ENCODE measurements at regions of chr19 and their contacts with region 1.

Region 1: GRCh38 chr19:48363810-48364563 is at the starts of genes SYNGR4 and TMEM143:
- DNase-seq: peak; percentile 99
- ATAC-seq: peak; percentile 87
- H3K4me3 Mint-ChIP-seq: peak within 1 kb of the TSS; percentile 81
- H3K27ac Mint-ChIP-seq: peak within 1 kb of the TSS; percentile 97
- H3K4me1 Mint-ChIP-seq: peaks cover 9% of the 10 kb centered on the region
- H3K27me3 Mint-ChIP-seq: peaks cover 18% of the 10 kb centered on the region
- CTCF ChIP-seq: no peak
- total RNA-seq, gene SYNGR4: not detected in 3 replicates
- total RNA-seq, gene TMEM143: 20.2 to 29.6 TPM (median 27.0 TPM) in 3 replicates

Region 2: DNA sequence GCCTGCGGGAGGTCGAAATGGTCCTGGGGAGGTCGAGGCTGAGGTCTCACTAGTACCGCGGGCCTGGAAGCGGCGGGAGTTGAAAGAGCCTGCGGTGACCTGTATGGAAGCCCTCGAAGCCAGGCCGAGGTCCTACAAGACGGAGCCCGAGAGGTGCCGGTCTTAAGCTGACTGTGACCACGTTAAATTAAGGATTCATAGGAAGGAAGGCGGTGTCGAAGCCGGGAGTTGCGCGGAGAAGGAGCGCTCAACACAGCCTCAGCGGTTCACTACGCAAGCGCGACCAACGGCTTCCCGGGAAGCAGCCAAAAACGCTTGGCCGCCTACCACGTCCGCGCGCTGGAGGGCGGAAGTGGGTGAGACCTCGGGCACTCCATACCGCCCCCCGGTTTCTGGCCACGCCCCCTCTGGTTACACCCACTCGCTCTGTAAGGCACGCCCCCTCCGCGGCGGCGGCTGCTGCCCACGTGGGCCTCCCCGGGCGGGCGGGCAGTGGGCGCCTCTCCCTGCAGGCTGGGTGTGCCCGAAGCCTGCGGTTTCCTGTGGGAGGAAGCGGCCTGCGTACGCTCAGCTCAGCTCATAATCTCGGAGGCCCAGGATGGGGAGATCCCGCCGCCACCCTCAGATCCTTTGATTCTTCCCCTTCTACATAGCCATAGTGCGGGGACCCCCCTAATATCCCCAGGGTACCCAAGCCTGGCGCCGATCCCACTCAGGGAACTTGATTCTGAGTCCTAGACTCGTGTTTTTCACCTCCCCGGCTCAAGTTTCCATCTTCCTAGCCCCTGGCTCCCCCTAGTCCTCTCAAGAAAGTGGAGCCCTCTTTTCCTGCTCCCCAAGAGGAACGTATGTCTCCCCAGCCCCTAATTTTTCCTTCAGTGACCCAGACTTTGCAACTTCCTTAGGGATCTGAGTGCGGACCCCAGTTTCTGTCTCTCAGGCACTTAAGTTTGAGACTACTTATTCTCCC is 42.1 kb before region 1 on chr19:
- CTCF ChIA-PET with region 1: interaction called, 13 read pairs
- POLR2A ChIA-PET with region 1: interaction called, 5 read pairs
- DNase-seq: peak; percentile 97
- ATAC-seq: peak; percentile 56
- H3K4me3 Mint-ChIP-seq: peak overlapping the region; percentile 91
- H3K27ac Mint-ChIP-seq: peak overlapping the region; percentile 98
- H3K4me1 Mint-ChIP-seq: peaks cover 53% of the 10 kb centered on the region
- H3K27me3 Mint-ChIP-seq: peaks cover 43% of the 10 kb centered on the region
- CTCF ChIP-seq: no peak

Region 3: DNA sequence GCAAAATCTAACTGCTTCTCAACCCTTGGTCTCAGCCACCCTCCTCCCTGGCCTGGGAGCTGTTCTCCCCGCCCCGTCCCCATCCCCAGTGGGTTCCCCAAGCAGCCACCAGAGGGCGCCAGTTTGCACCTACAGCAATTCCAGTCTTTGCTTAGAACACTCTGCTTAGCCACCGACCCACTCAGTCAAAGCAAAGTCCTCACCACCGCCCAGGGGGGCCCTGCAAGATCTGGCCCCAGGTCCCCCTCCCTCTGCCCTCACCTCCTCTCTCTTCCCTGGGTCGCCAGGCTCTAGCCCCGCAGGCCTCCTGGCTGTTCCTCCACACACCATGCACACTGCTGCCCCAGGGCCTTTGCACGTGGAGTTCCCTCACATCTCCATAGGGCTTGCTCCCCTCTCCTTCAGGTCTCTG is 12.6 kb before region 1 on chr19:
- CTCF ChIA-PET with region 1: interaction called, 52 read pairs
- POLR2A ChIA-PET with region 1: interaction called, 3 read pairs
- DNase-seq: peak; percentile 90
- ATAC-seq: peak; percentile 90
- H3K4me3 Mint-ChIP-seq: no peak overlapping the region
- H3K27ac Mint-ChIP-seq: no peak overlapping the region
- H3K4me1 Mint-ChIP-seq: peaks cover 7% of the 10 kb centered on the region; the same call in 1 of the 2 replicates
- H3K27me3 Mint-ChIP-seq: no peaks in the 10 kb centered on the region; the same call in 1 of the 2 replicates
- CTCF ChIP-seq: peak; percentile 90

Region 4: DNA sequence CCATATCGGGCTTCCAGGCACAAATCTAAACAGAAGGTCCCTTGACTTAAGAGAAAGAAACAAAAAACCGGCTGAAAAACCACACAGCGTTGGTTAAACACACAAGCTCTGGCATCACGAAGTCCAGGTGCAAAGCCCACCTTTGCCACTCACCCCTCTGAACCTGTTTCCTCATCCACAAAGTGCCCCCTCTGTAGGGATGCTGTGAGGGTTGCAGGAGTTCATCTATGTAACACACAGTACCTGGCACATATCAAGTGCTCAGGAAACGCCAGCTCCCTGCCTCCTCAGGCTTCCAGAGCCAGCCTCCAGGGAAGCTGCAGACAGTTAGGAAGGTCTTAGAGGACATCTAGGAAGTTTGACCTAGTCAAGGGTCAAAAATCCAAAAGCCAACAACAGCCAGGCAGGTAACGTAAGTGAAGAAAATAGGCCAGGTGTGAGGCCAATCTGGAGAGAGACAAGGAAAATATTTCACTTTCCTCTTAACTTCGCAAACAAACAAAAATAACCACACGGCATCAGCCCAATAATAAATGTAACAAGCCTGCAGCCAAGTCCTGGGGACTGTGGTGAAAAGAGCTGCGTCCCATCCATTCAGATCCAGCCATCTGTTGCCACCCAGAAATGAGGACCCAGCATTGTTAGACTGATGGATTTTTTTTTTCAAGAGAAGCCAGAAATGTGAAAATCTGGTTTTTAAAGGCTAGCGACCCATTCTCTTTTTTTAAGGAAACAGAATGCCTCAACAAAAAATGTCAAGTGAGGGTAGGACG is 17.4 kb after region 1 on chr19:
- CTCF ChIA-PET with region 1: interaction called, 10 read pairs
- POLR2A ChIA-PET with region 1: no interaction called
- DNase-seq: no peak
- ATAC-seq: peak; percentile 80
- H3K4me3 Mint-ChIP-seq: no peak overlapping the region
- H3K27ac Mint-ChIP-seq: no peak overlapping the region
- H3K4me1 Mint-ChIP-seq: no peaks in the 10 kb centered on the region
- H3K27me3 Mint-ChIP-seq: no peaks in the 10 kb centered on the region; the same call in 1 of the 2 replicates
- CTCF ChIP-seq: no peak

Region 5: DNA sequence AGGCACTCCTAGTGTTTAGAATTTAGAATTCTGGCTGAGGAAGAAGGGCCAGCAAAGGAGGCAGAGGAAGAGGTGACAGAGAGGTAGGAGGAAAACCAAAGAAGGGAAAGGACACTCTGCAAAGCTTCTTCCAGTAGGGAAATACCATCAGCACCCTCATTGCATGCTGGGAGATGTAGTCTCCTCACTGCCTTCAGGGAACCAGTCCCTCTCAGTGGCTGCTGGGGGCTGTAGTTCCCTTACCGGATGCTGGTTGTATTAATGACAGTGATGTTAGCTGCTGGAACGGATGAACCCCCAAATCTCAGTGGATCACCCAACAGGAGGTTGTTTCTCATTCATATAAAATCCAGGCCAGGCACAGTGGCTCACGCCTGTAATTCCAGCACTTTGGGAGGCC is 39.6 kb after region 1 on chr19:
- CTCF ChIA-PET with region 1: interaction called, 14 read pairs
- POLR2A ChIA-PET with region 1: interaction called, 7 read pairs
- DNase-seq: peak; percentile 71
- ATAC-seq: peak; percentile 33
- H3K4me3 Mint-ChIP-seq: no peak overlapping the region
- H3K27ac Mint-ChIP-seq: peak overlapping the region; percentile 96
- H3K4me1 Mint-ChIP-seq: peaks cover 56% of the 10 kb centered on the region
- H3K27me3 Mint-ChIP-seq: no peaks in the 10 kb centered on the region; the same call in 1 of the 2 replicates
- CTCF ChIP-seq: no peak

Region 6: GRCh38 chr19:48445606-48446481 is 81.9 kb after region 1 on chr19 and contains the start of gene GRWD1:
- CTCF ChIA-PET with region 1: interaction called, 12 read pairs
- POLR2A ChIA-PET with region 1: no interaction called
- DNase-seq: peak; percentile 91
- ATAC-seq: peak; percentile 79
- H3K4me3 Mint-ChIP-seq: peak within 1 kb of the TSS; percentile 93
- H3K27ac Mint-ChIP-seq: peak within 1 kb of the TSS; percentile 99
- H3K4me1 Mint-ChIP-seq: peaks cover 18% of the 10 kb centered on the region
- H3K27me3 Mint-ChIP-seq: peaks cover 19% of the 10 kb centered on the region
- CTCF ChIP-seq: no peak
- total RNA-seq, gene GRWD1: 59.8 to 67.2 TPM (median 61.6 TPM) in 3 replicates

Region 7: DNA sequence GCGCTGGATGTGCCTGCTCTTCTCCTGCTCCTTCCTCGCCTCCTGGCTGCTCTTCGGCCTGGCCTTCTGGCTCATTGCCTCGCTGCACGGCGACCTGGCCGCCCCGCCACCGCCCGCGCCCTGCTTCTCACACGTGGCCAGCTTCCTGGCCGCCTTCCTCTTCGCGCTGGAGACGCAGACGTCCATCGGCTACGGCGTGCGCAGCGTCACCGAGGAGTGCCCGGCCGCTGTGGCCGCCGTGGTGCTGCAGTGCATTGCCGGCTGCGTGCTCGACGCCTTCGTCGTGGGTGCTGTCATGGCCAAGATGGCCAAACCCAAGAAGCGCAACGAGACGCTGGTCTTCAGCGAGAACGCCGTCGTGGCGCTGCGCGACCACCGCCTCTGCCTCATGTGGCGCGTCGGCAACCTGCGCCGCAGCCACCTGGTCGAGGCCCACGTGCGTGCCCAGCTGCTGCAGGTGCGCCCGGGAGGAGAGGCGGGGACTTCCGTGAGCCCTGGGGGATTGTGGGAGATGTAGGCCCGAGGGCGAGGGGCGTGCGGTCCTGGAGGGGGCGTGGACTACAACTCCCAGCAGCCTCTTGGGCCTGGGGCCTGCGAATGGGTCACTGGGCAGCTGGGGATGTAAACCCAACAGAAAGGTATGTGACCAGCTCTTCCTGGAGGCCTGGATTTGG is 98.1 kb after region 1 on chr19:
- CTCF ChIA-PET with region 1: no interaction called
- POLR2A ChIA-PET with region 1: no interaction called
- DNase-seq: peak; percentile 91
- ATAC-seq: peak; percentile 97
- H3K4me3 Mint-ChIP-seq: no peak overlapping the region
- H3K27ac Mint-ChIP-seq: no peak overlapping the region
- H3K4me1 Mint-ChIP-seq: 0 out of 2 replicates have a peak, but pooled peaks cover 2% of the 10 kb centered on the region
- H3K27me3 Mint-ChIP-seq: peaks cover 27% of the 10 kb centered on the region
- CTCF ChIP-seq: no peak

Measured in WTC11 (cell line).